ENCODE measurements at regions of chr13 and their contacts with region 1.

Region 1: DNA sequence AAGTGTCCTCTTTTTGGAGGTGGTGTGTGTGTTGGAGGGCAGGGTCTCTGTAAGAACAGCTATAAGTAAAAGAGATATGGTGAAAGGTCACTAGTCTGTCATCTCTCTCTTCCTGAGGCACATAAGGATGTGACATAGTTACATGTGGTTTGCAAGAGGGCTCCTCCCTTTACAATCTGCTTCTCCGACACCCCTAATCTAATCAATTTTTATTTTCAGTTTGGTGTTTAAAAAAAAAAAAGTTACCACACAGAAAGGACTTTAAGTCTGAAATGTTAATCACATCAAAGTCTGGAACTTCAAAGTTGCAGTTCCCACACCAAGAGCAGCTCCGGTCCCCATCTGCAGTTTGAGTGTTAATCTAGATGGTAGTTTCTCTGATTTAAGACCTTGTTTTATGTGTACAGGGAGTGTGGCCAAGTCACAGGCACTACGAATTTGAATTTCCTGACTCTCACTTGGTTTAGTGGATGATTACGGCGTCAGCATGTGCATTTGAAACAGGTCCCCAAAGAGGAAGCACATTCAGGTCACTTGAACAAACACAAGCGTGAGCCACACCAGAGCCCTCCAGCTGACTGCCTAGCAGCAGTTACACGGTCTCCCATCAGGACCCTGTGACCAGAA is 53.1 kb downstream of the FOXO1 start:
- DNase-seq: peak; percentile 71
- ATAC-seq: peak; percentile 86
- H3K4me3 Mint-ChIP-seq: peak overlapping the region; percentile 75
- H3K27ac Mint-ChIP-seq: peak overlapping the region; percentile 99
- H3K4me1 Mint-ChIP-seq: peaks cover 95% of the 10 kb centered on the region
- H3K27me3 Mint-ChIP-seq: no peaks in the 10 kb centered on the region

Region 2: DNA sequence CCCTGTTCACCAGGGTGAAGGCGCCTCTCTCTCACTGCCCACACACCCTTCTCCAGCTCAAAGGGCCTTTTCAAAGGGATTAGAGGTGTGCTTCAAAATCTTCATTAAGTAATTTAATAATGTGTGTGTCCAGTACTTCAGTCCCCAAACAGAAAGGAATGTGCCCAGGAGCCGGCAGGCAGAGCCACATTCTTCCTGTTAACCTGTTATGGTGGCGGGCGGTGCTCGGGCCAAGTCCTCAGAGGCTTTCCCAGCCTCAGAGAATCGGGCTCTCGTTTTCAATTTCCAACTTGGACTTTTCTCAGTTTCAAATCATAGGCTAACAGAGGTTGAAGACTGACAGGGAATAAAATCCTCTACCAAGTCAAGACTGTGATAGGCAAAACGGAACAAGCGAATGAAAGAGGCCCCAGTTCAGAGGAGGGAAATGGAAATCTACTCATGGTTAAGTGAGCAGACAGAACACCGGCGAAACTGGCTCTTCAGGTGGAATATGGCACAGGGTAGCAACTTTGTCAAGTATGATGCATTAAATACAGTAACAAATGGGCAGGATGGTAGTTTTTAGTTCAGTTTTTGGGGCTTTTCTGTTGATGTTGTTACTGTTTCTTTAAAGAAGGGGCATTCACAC is 15.4 kb before region 1 on chr13:
- CTCF ChIA-PET with region 1: interaction called, 3 read pairs
- POLR2A ChIA-PET with region 1: no interaction called
- intact Hi-C with region 1: loop called in 1 of 2 experiments (anchors 2 kb)
- DNase-seq: no peak
- ATAC-seq: no peak
- H3K4me3 Mint-ChIP-seq: peak overlapping the region; percentile 57
- H3K27ac Mint-ChIP-seq: peak overlapping the region; percentile 89
- H3K4me1 Mint-ChIP-seq: peaks cover 92% of the 10 kb centered on the region
- H3K27me3 Mint-ChIP-seq: no peaks in the 10 kb centered on the region

Region 3: DNA sequence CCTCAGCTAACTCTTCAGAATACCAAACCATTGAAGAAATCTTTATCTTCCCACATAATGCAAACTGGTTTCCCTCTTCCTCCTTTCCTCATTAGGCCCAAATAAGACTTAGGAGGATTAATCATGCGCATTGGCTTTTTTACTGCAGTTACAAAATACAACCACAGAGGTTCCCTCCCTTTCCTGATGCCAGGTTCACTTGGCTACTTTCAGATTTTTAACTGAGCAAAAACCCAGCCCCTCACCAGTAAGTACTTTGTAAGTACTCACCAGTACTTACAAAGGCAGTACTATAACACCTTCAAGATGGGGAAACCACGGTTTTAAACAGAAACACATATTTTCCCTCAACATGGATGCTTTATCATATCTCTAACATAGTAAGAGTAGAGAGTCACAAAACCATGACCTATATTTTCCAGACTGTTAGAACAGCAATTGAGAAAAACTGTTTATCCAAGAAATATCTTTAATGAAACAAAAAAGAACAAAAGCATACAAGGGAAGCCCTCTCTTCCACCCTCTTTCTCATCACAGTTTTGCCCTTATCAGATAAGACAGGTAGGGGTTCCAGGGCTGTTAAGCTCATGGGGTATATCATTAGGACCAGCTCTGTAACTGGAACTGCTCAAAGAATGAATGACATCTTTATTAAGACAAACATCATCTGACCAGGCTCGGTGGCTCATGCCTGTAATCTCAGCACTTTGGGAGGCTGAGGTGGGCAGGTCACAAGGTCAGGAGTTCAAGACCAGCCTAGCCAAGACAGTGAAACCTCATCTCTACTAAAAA is 40.4 kb after region 1 on chr13:
- CTCF ChIA-PET with region 1: interaction called, 4 read pairs
- POLR2A ChIA-PET with region 1: no interaction called
- intact Hi-C with region 1: loop called in 1 of 2 experiments (anchors 5 kb)
- DNase-seq: peak; percentile 38
- ATAC-seq: peak; percentile 86
- H3K4me3 Mint-ChIP-seq: peak overlapping the region; percentile 38
- H3K27ac Mint-ChIP-seq: peak overlapping the region; percentile 87
- H3K4me1 Mint-ChIP-seq: peaks cover 95% of the 10 kb centered on the region
- H3K27me3 Mint-ChIP-seq: no peaks in the 10 kb centered on the region

Region 4: DNA sequence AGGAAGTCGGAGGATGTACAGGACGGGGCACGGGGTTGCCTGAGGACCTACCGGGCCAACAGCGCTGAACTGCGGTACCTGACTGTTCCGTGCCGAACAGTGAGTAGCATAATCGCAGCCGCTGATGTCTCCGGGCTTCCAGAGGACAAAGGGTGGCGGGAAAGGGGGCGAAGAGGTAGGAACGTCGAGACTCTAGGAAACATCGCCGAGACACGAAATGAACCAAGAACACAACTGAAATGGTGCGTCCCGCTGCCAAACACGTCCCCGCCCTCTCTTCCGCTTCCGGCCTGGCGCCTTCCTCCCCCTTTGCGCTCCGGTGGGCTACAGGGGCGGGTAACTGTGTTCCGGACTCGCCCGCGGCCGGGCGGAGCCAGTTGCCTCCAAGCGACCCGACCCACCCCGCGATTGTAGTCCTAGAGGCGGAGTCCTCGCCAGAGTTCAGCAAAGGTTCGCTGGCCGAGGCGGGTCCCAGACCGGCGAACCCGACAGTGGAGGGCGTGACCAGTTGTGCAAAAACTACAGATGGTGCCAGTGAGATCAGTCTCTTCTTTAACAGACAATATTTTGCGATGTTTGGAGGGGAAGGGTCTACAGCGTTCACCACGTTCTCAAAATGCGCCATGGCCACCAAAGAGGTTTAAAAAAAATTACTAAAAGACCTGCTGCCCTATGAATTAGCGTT is 157.8 kb after region 1 on chr13 and contains the start of gene MRPS31:
- CTCF ChIA-PET with region 1: no interaction called
- POLR2A ChIA-PET with region 1: no interaction called
- intact Hi-C with region 1: loop called in 1 of 2 experiments (anchors 10 kb)
- DNase-seq: peak; percentile 97
- ATAC-seq: peak; percentile 99
- H3K4me3 Mint-ChIP-seq: peak within 1 kb of the TSS; percentile 89
- H3K27ac Mint-ChIP-seq: peak within 1 kb of the TSS; percentile 97
- H3K4me1 Mint-ChIP-seq: peaks cover 30% of the 10 kb centered on the region
- H3K27me3 Mint-ChIP-seq: no peaks in the 10 kb centered on the region
- total RNA-seq, gene MRPS31: 45.8 to 46.1 TPM

Measured in activated CD4-positive, alpha-beta T cell treated with anti-CD3 and anti-CD28 coated beads for 36 hours (primary cell).